KBM-7 (cell line): ENCODE measurements at regions of chr5 and their contacts with region 1.

Region 1: GRCh38 chr5:176660860-176661641 is 13.8 kb downstream of the TSPAN17 start:
- DNase-seq: peak; percentile 82

Region 2: DNA sequence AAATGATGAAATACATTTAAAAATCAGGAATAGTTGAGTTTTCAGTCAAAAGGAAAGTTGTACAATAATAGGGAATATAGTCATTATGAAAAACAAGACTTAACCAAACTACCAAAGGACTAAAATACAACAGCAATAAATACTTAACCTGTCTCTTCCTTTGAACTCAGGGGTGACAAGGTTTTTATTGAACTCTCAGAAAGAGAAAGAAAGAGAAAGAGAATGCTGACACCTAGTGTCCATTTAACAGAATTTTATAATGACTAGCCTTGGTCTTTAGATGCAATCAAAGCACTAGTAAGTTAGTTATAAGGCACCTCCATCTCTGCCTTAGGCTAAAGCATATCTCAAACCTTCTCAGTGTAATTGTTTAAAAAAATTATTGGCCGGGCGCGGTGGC is 298.0 kb after region 1 on chr5:
- in situ Hi-C with region 1: loop called (anchors 25 kb)
- DNase-seq: peak; percentile 55

Region 3: DNA sequence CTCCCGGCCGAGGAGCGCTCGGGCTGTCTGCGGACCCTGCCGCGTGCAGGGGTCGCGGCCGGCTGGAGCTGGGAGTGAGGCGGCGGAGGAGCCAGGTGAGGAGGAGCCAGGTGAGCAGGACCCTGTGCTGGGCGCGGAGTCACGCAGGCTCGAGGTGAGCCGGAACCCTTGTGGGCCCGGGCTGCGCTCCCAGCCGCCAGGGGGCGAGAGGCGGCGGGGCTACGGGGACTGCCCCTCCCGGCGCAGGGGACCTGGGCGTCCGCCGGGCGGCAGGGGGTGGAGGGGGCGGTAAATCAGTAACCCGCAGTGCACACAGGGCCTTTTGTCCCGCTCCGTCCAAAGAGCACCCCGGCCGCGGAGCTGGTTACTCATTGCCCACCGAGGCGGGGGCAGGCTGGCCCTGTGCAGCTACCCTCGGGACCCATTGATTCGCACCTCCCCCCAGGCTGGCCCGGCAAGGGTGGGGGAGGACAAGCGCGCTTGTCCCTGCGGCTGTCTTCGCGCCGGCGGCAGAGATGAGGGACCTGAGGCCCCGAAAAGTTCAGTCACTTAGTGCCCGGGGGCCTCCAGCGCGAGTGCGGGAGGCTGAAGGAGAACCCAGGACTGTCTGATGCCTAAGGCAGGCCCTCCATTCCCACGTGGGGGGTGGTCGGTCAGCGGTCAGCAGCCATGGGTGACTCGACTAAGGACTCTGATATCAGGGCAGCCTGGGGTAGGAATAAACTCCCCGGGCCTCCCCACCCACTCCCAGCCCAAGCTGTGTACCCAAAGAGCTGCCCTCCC is 426.1 kb after region 1 on chr5:
- in situ Hi-C with region 1: loop called (anchors 25 kb)
- DNase-seq: peak; percentile 79